Activated CD4-positive, alpha-beta T cell treated with anti-CD3 and anti-CD28 coated beads for 36 hours (primary cell): ENCODE measurements at regions of chr11 and their contacts with region 1.

Region 1: GRCh38 chr11:65569973-65570918 is at the start of gene ZNRD2:
- DNase-seq: peak; percentile 100
- ATAC-seq: peak; percentile 75
- H3K4me3 Mint-ChIP-seq: peak within 1 kb of the TSS; percentile 97
- H3K27ac Mint-ChIP-seq: peak within 1 kb of the TSS; percentile 96
- H3K4me1 Mint-ChIP-seq: peaks cover 60% of the 10 kb centered on the region
- H3K27me3 Mint-ChIP-seq: no peaks in the 10 kb centered on the region
- total RNA-seq, gene ZNRD2: 50.7 to 56.4 TPM

Region 2: GRCh38 chr11:64778508-64779346 is 791.5 kb before region 1 on chr11 and contains the start of gene SF1:
- CTCF ChIA-PET with region 1: no interaction called
- POLR2A ChIA-PET with region 1: no interaction called
- intact Hi-C with region 1: loop called in 1 of 2 experiments (anchors 5 kb)
- DNase-seq: peak; percentile 99
- ATAC-seq: peak; percentile 91
- H3K4me3 Mint-ChIP-seq: peak within 1 kb of the TSS; percentile 97
- H3K27ac Mint-ChIP-seq: peak within 1 kb of the TSS; percentile 99
- H3K4me1 Mint-ChIP-seq: peaks cover 57% of the 10 kb centered on the region
- H3K27me3 Mint-ChIP-seq: no peaks in the 10 kb centered on the region
- total RNA-seq, gene SF1: 318 to 362 TPM

Region 3: GRCh38 chr11:65117216-65118096 is 452.8 kb before region 1 on chr11 and contains the start of gene ZNHIT2:
- CTCF ChIA-PET with region 1: no interaction called
- POLR2A ChIA-PET with region 1: no interaction called
- intact Hi-C with region 1: loop called in 1 of 2 experiments (anchors 1 kb)
- DNase-seq: peak; percentile 100
- ATAC-seq: peak; percentile 68
- H3K4me3 Mint-ChIP-seq: peak within 1 kb of the TSS; percentile 88
- H3K27ac Mint-ChIP-seq: peak within 1 kb of the TSS; percentile 95
- H3K4me1 Mint-ChIP-seq: peaks cover 57% of the 10 kb centered on the region
- H3K27me3 Mint-ChIP-seq: no peaks in the 10 kb centered on the region
- total RNA-seq, gene ZNHIT2: 7.1 to 9.7 TPM

Region 4: GRCh38 chr11:65497141-65498041 is 72.9 kb before region 1 on chr11:
- CTCF ChIA-PET with region 1: interaction called, 4 read pairs
- POLR2A ChIA-PET with region 1: interaction called, 9 read pairs
- intact Hi-C with region 1: loop called in 1 of 2 experiments (anchors 2 kb)
- DNase-seq: peak; percentile 100
- ATAC-seq: peak; percentile 70
- H3K4me3 Mint-ChIP-seq: no peak overlapping the region
- H3K27ac Mint-ChIP-seq: peak overlapping the region; percentile 96
- H3K4me1 Mint-ChIP-seq: peaks cover 41% of the 10 kb centered on the region
- H3K27me3 Mint-ChIP-seq: no peaks in the 10 kb centered on the region

Region 5: DNA sequence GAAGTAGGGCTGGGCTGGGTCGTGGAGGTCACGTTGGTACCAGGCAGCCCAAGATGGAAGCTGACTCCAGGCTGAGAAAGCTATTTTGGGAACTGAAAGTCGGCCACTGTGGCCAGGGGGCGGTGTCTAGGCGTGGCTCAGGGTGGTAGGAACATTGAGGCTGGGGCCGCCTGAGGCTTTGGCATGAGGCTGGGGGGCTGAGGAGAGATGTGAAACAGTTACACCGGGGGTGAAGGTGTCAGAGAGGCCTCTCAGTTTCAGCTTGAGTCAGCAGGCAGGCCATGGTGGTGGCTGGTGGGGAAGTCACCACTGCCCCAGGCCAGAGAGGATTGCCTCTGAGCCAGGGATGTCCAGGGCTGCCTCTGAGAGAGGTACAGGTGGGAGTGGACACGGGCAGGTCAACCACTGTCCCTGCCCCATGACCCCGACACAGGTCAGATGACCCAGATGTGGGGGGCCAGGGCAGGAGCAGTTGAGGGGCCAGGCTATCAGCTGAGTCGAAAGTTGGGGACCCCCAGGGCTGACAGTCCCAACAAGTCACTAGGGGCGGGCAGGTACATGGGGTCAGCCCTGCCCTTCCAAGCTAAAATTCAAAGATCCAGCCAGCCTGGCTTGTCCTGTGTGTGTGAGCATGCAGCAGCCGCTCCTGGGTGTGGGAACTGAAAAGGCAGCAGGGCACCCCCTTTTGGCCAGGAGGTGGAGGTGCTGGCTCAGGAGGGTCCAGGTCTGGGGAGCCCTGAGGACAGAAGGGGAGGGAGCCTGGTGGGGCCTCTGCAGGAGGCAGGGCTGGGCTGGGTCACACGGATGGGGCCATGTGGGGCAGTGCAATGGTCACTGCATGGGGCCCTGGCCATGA is 18.2 kb after region 1 on chr11:
- CTCF ChIA-PET with region 1: interaction called, 56 read pairs
- POLR2A ChIA-PET with region 1: interaction called, 4 read pairs
- intact Hi-C with region 1: loop called (anchors 1 kb)
- DNase-seq: peak; percentile 88
- ATAC-seq: peak; percentile 86
- H3K4me3 Mint-ChIP-seq: peak overlapping the region; percentile 43
- H3K27ac Mint-ChIP-seq: peak overlapping the region; percentile 90
- H3K4me1 Mint-ChIP-seq: peaks cover 39% of the 10 kb centered on the region
- H3K27me3 Mint-ChIP-seq: no peaks in the 10 kb centered on the region

Region 6: DNA sequence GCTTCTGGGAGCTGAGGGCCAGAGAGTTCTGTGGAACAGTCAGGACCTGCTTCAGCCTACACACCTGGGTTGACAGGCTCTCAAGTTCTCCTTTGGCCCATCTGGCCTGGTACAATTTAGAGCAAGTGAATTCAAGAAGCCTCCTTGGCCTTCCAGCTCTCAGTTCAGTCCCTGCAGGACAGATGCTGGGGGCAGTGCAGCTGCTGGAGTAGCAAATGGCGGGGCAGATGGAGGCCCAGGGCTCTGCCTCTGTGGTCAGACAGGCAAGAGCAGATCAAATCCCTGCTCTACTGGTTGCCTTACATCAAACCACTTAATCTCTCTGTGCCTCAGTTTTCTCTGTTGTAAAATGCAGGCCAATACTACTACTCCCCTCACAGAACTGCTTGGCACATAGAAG is 34.0 kb after region 1 on chr11:
- CTCF ChIA-PET with region 1: no interaction called
- POLR2A ChIA-PET with region 1: no interaction called
- intact Hi-C with region 1: no loop called
- DNase-seq: no peak
- ATAC-seq: no peak
- H3K4me3 Mint-ChIP-seq: no peak overlapping the region
- H3K27ac Mint-ChIP-seq: no peak overlapping the region
- H3K4me1 Mint-ChIP-seq: peaks cover 3% of the 10 kb centered on the region
- H3K27me3 Mint-ChIP-seq: no peaks in the 10 kb centered on the region

Region 7: DNA sequence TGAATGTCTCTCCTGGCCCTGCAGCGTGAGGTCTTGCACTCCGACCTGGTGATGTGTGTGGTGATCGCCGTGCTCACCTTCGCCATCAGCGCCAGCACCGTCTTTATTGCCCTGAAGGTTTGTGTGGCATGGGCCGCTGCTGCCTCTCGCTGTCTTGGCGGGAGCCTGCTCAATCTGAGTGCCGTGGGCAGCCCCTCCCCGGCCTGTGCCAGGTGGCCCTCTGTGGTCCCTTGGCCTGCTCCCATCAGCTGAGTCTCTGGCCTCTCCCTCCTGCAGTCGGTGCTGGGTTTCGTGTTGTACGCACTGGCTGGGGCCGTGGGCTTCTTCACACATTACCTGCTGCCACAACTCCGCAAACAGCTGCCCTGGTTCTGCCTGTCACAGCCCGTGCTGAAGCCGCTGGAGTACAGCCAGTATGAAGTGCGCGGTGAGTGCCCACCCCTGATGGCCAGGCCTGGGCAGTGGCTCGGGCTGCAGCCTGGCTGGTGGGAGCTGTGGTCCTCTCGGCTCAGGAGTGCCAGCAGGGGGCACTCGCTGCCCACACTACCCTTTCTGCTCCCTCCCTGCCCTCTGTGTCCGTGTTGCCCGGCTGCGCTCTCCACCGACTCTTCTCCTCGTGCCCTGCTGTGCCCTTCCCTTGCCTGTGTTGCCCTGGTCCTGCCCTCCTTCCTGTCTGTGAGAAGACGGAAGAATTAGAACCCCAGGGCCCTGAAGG is 55.5 kb after region 1 on chr11:
- CTCF ChIA-PET with region 1: no interaction called
- POLR2A ChIA-PET with region 1: no interaction called
- intact Hi-C with region 1: no loop called
- DNase-seq: peak; percentile 73
- ATAC-seq: peak; percentile 85
- H3K4me3 Mint-ChIP-seq: no peak overlapping the region
- H3K27ac Mint-ChIP-seq: no peak overlapping the region
- H3K4me1 Mint-ChIP-seq: no peaks in the 10 kb centered on the region
- H3K27me3 Mint-ChIP-seq: no peaks in the 10 kb centered on the region

Region 8: DNA sequence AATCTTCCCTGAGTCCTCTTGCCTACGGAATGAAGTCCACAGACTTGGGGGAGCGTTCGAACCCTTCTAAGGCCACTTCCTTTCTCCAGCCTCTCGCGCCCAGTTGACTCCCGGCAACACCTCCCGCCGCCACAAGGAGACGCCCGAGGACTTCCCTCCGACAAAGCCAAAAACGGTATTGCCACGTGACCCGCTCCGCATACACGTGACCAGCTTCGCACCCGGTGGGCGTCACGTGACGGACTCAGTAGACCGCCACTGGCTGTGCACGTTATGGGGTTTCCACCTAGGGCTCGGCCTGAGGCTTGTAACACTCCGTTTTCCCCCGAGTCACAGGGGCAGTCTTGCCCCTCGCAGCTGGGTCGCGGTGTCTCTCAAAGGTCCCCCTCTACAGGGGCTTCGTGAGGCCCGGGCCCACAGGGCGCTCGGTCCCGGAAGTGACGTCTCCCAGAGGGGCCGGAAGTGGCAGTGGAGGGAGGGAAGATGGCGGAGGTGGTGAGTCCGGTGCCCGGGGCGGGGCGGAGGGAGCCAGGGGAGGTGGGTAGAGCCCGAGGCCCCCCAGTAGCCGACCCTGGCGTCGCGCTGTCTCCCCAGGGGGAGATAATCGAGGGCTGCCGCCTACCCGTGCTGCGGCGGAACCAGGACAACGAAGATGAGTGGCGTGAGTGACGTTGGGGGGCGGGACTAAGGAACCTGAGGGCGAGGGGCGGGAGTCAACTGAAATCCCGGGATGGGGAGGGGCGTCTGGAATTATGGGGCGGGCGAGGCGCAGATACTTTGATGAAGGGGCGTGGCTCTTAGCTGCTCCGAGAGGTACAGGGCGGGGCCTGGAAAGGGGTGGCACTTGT is 141.8 kb after region 1 on chr11 and contains the start of gene KAT5:
- CTCF ChIA-PET with region 1: no interaction called
- POLR2A ChIA-PET with region 1: interaction called, 3 read pairs
- intact Hi-C with region 1: loop called in 1 of 2 experiments (anchors 1 kb)
- DNase-seq: peak; percentile 99
- ATAC-seq: peak; percentile 86
- H3K4me3 Mint-ChIP-seq: peak within 1 kb of the TSS; percentile 90
- H3K27ac Mint-ChIP-seq: peak within 1 kb of the TSS; percentile 96
- H3K4me1 Mint-ChIP-seq: peaks cover 27% of the 10 kb centered on the region
- H3K27me3 Mint-ChIP-seq: no peaks in the 10 kb centered on the region
- total RNA-seq, gene KAT5: 56.5 to 65.1 TPM

Region 9: DNA sequence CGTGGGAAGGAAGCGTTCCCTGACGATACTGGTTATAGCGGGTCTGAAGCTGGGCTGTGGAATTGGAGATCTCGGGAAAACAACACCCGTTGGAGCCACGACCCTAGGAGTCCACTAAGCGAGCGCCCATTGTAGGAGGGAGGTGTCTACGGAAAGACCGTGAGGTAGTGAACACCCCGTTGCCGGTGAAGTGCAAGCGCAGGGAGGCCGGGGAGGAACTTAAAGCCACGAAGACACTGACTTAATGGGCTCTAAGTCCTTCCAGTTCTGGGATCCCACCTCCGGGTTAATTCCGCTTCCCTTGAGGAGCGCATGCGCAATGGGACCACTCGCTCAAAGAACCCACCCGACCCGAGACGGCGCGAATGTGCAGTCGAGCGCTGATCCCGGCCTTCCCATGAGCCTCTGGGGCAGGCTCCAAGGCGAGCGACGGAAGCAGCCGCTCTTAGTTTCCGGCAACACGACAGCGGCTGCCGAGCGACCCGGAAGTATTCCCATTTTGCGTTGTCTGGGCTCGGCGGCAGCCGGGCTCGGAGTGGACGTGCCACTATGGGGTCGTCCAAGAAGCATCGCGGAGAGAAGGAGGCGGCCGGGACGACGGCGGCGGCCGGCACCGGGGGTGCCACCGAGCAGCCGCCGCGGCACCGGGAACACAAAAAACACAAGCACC is 391.1 kb after region 1 on chr11 and contains the start of gene SART1:
- CTCF ChIA-PET with region 1: no interaction called
- POLR2A ChIA-PET with region 1: no interaction called
- intact Hi-C with region 1: loop called in 1 of 2 experiments (anchors 1 kb)
- DNase-seq: peak; percentile 98
- ATAC-seq: peak; percentile 91
- H3K4me3 Mint-ChIP-seq: peak within 1 kb of the TSS; percentile 92
- H3K27ac Mint-ChIP-seq: peak within 1 kb of the TSS; percentile 97
- H3K4me1 Mint-ChIP-seq: peaks cover 37% of the 10 kb centered on the region
- H3K27me3 Mint-ChIP-seq: no peaks in the 10 kb centered on the region
- total RNA-seq, gene SART1: 54.7 to 84.5 TPM

Region 10: GRCh38 chr11:66344550-66345315 is 774.5 kb after region 1 on chr11 and contains the start of gene BRMS1:
- CTCF ChIA-PET with region 1: no interaction called
- POLR2A ChIA-PET with region 1: no interaction called
- intact Hi-C with region 1: no loop called
- DNase-seq: peak; percentile 98
- ATAC-seq: peak; percentile 80
- H3K4me3 Mint-ChIP-seq: peak within 1 kb of the TSS; percentile 93
- H3K27ac Mint-ChIP-seq: peak within 1 kb of the TSS; percentile 90
- H3K4me1 Mint-ChIP-seq: peaks cover 45% of the 10 kb centered on the region
- H3K27me3 Mint-ChIP-seq: peaks cover 3% of the 10 kb centered on the region
- total RNA-seq, gene BRMS1: 29.2 to 30.2 TPM